ENCODE measurements at regions of chr13 and their contacts with region 1.

Region 1: DNA sequence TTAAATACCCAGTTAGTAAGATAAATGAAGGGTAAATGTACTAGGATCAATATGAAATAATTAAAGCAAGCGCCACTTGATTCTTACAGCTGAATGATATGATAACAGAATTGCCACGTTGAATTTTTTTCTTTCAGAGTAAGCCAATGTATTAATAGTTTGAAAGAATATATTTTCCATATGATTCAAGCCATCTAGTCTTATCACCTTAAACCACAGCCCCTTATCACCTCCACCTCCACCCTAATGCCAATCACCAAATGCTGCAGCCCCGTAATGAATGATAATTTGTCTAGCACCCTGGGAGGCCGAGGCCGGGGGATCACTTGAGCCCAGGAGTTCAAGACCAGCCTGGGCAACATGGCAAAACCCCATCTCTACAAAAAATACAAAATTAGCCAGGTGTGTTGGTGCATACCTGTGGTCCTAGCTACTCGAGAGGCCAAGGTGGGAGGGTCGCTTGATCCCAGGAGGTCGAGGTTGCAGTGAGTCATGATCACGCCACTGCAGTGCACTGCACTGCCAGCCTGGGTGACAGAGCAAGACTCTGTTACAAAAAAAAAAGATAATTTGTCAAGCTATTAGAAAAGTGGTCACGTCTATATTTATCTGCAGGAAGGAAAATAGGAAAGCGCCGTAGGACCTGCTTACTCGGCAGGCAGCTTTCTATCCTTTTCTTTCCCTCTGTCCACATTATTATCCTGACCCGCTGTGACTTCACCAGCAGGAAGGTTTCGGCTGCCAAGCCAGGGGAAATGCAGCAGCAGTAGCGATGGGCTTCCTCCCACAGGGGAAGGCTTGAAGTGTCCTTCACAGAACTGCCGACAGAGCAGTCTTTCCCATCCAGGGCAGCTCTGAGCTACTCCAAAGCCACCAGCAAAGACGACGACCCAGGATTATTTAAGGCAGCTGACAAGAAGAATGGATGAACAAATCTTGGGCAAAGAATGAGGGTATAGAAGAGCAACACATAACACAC is 19.7 kb upstream of the CLN5 start:
- DNase-seq: no peak
- H3K4me3 ChIP-seq: no peak overlapping the region
- H3K4me3 Mint-ChIP-seq: no peak overlapping the region
- H3K27ac ChIP-seq: no peak overlapping the region
- H3K27ac Mint-ChIP-seq: peak overlapping the region in 1 of 8 donors; percentile 8
- H3K4me1 ChIP-seq: no peaks in the 10 kb centered on the region
- H3K4me1 Mint-ChIP-seq: peaks cover 6 to 14% (median 9%) of the 10 kb centered on the region in 3 donors
- H3K27me3 ChIP-seq: peaks cover 8% of the 10 kb centered on the region
- H3K27me3 Mint-ChIP-seq: peaks cover 33 to 75% of the 10 kb centered on the region in 2 donors

Region 2: GRCh38 chr13:75326173-75327134 is 1645.7 kb before region 1 on chr13:
- CTCF ChIA-PET with region 1: no interaction called
- POLR2A ChIA-PET with region 1: interaction called, 12 read pairs
- DNase-seq: peak; percentile 23 to 82 (median 63)
- H3K4me3 ChIP-seq: peak overlapping the region; percentile 84
- H3K4me3 Mint-ChIP-seq: peak overlapping the region; percentile 85 to 94 (median 92)
- H3K27ac ChIP-seq: peak overlapping the region; percentile 90
- H3K27ac Mint-ChIP-seq: peak overlapping the region; percentile 82 to 97 (median 94)
- H3K4me1 ChIP-seq: peaks cover 32% of the 10 kb centered on the region
- H3K4me1 Mint-ChIP-seq: peaks cover 37 to 58% (median 58%) of the 10 kb centered on the region in 3 donors
- H3K27me3 ChIP-seq: no peaks in the 10 kb centered on the region
- H3K27me3 Mint-ChIP-seq: peaks cover 2 to 7% of the 10 kb centered on the region in 2 donors

Region 3: GRCh38 chr13:76812206-76812897 is 159.8 kb before region 1 on chr13:
- CTCF ChIA-PET with region 1: no interaction called
- POLR2A ChIA-PET with region 1: no interaction called
- DNase-seq: no peak
- H3K4me3 ChIP-seq: no peak overlapping the region
- H3K4me3 Mint-ChIP-seq: no peak overlapping the region
- H3K27ac ChIP-seq: no peak overlapping the region
- H3K27ac Mint-ChIP-seq: peak overlapping the region in 1 of 8 donors; percentile 17
- H3K4me1 ChIP-seq: no peaks in the 10 kb centered on the region
- H3K4me1 Mint-ChIP-seq: peaks cover 0 to 4% (median 0%) of the 10 kb centered on the region in 3 donors
- H3K27me3 ChIP-seq: no peaks in the 10 kb centered on the region
- H3K27me3 Mint-ChIP-seq: peaks cover 18 to 35% of the 10 kb centered on the region in 2 donors

Region 4: GRCh38 chr13:76917095-76917494 is 55.0 kb before region 1 on chr13:
- CTCF ChIA-PET with region 1: no interaction called
- POLR2A ChIA-PET with region 1: no interaction called
- DNase-seq: no peak
- H3K4me3 ChIP-seq: no peak overlapping the region
- H3K4me3 Mint-ChIP-seq: no peak overlapping the region
- H3K27ac ChIP-seq: no peak overlapping the region
- H3K27ac Mint-ChIP-seq: no peak overlapping the region
- H3K4me1 ChIP-seq: no peaks in the 10 kb centered on the region
- H3K4me1 Mint-ChIP-seq: no peaks in the 10 kb centered on the region
- H3K27me3 ChIP-seq: no peaks in the 10 kb centered on the region
- H3K27me3 Mint-ChIP-seq: peaks cover 13 to 42% of the 10 kb centered on the region in 2 donors